AG04450 (cell line): ENCODE measurements at regions of chr10 and their contacts with region 1.

Region 1: GRCh38 chr10:112140110-112140970 is 43.2 kb downstream of the GPAM start:
- DNase-seq: peak; percentile 23
- H3K4me3 ChIP-seq: no peak overlapping the region
- H3K27ac ChIP-seq: no peak overlapping the region
- H3K27me3 ChIP-seq: peaks cover 3% of the 10 kb centered on the region
- CTCF ChIP-seq: peak; percentile 93

Region 2: GRCh38 chr10:112115799-112116385 is 24.4 kb before region 1 on chr10:
- CTCF ChIA-PET with region 1: interaction called, 76 read pairs
- POLR2A ChIA-PET with region 1: no interaction called
- DNase-seq: no peak
- H3K4me3 ChIP-seq: no peak overlapping the region
- H3K27ac ChIP-seq: no peak overlapping the region
- H3K27me3 ChIP-seq: peaks cover 4% of the 10 kb centered on the region
- CTCF ChIP-seq: peak; percentile 74

Region 3: GRCh38 chr10:112151524-112152039 is 11.2 kb after region 1 on chr10:
- CTCF ChIA-PET with region 1: interaction called, 90 read pairs
- POLR2A ChIA-PET with region 1: no interaction called
- DNase-seq: no peak
- H3K4me3 ChIP-seq: no peak overlapping the region
- H3K27ac ChIP-seq: no peak overlapping the region
- H3K27me3 ChIP-seq: no peaks in the 10 kb centered on the region
- CTCF ChIP-seq: no peak

Region 4: DNA sequence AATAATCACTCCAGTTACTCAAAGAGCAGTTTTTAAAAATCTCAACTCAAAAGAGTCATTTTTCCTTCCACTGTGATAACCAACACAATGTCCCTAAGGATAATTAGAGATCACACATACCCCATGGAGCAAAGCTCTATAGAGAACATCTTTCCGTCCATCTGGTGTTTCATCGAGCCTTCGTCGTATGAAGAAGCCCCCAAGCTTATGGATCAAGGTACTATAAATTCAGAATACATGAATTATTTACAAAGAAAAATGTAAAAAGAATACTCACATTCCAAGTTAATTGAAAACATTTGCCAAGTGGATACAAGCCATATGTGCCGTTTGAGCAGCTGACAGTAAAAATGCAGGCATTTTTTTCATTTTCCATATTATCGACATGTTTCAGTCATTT is 28.4 kb after region 1 on chr10:
- CTCF ChIA-PET with region 1: interaction called, 23 read pairs
- POLR2A ChIA-PET with region 1: no interaction called
- DNase-seq: no peak
- H3K4me3 ChIP-seq: no peak overlapping the region
- H3K27ac ChIP-seq: no peak overlapping the region
- H3K27me3 ChIP-seq: no peaks in the 10 kb centered on the region
- CTCF ChIP-seq: no peak

Region 5: GRCh38 chr10:112183329-112184051 is 43.1 kb after region 1 on chr10 and contains the start of gene GPAM:
- CTCF ChIA-PET with region 1: interaction called, 12 read pairs
- POLR2A ChIA-PET with region 1: no interaction called
- DNase-seq: peak; percentile 77
- H3K4me3 ChIP-seq: peak within 1 kb of the TSS; percentile 95
- H3K27ac ChIP-seq: peak within 1 kb of the TSS; percentile 83
- H3K27me3 ChIP-seq: no peaks in the 10 kb centered on the region
- CTCF ChIP-seq: no peak
- polyA plus RNA-seq, gene GPAM: 7.2 and 10.6 TPM in 2 replicates

Region 6: DNA sequence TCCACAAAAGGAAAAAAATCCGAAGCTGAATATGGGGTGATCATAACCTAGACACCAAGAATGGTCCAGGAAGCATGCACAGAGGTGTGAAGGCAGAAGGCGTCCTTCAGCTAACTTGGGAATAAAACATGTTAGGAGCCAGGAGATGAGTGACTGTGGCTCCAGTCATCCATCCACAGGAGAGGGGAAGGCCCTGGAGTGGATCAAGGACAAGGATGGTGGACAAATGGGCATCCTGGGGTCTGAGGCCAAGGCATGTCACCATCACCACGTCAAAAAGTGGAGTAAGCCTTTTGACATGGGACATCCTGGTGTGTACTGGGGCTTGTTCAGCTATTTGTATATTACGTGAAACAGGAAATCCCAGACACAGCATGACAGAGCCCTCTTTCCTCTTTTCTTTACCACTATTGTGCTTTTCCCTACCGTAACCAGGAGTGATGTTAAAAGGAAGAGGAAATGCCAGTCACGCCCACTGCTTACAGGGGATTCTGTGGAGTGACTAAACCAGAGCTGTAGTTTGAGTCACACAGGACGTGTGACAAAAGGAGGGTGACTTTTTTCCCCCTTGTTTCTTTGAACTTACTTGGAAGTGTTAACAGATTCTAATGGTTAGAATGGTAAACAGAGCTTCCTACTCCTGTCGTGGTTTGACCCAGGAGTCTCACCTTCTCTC is 248.9 kb after region 1 on chr10:
- CTCF ChIA-PET with region 1: no interaction called
- POLR2A ChIA-PET with region 1: no interaction called
- DNase-seq: no peak
- H3K4me3 ChIP-seq: no peak overlapping the region
- H3K27ac ChIP-seq: no peak overlapping the region
- H3K27me3 ChIP-seq: peaks cover 2% of the 10 kb centered on the region
- CTCF ChIP-seq: no peak

Region 7: GRCh38 chr10:112434988-112435619 is 294.8 kb after region 1 on chr10:
- CTCF ChIA-PET with region 1: interaction called, 10 read pairs
- POLR2A ChIA-PET with region 1: no interaction called
- DNase-seq: no peak
- H3K4me3 ChIP-seq: no peak overlapping the region
- H3K27ac ChIP-seq: no peak overlapping the region
- H3K27me3 ChIP-seq: no peaks in the 10 kb centered on the region
- CTCF ChIP-seq: peak; percentile 47

Region 8: GRCh38 chr10:112461029-112461887 is 320.9 kb after region 1 on chr10:
- CTCF ChIA-PET with region 1: no interaction called
- POLR2A ChIA-PET with region 1: no interaction called
- DNase-seq: peak; percentile 24
- H3K4me3 ChIP-seq: no peak overlapping the region
- H3K27ac ChIP-seq: peak overlapping the region; percentile 57
- H3K27me3 ChIP-seq: no peaks in the 10 kb centered on the region
- CTCF ChIP-seq: no peak